ENCODE measurements at regions of chr3 and their contacts with region 1.

Region 1: DNA sequence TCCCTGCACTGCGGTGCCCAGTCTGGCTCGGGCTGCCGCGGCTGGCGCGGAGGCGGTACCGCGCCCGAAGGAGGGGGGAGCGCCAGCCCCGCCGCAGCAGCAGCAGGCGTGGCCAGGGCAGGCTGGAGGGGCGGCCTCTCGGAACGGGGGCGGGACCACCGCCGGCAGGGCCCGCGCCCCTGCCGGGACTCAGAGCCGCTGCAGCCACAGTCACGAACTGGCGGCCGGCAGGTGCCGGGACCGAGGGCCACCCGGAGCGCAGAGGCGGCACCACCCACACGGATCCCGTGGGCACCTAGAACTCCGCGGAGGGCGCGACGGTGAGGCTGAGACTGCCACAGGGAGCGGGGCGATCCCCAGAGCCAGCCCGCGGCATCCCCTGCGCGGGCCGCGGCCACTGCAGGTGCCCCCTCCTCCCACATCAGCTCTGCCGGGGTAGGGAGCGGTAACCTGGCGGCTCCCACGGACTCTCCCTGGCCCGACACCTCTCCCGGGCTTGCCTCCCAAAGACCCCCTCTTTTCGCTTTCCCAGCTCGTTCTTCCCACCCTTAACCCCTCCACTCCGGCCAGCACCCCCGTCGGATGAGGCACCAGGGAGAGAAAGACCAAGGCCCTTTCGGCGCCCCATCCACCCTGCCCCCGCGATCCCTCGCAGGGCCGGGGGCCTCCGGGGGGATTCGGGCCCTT is at the start of gene VWA5B2:
- DNase-seq: peak in 1 of 2 donors; percentile 26
- H3K4me3 ChIP-seq: peak within 1 kb of the TSS; percentile 41 to 68 (median 54)
- H3K27ac ChIP-seq: no peak within 1 kb of the TSS
- H3K4me1 ChIP-seq: peaks cover 4 to 8% of the 10 kb centered on the region in 2 donors
- H3K27me3 ChIP-seq: peaks cover 10 to 37% of the 10 kb centered on the region in 2 donors
- CTCF ChIP-seq: peak in 1 of 3 donors; percentile 29
- POLR2A ChIP-seq: no peak
- total RNA-seq, gene VWA5B2: 0.16 to 0.88 (median 0.33) TPM

Region 2: DNA sequence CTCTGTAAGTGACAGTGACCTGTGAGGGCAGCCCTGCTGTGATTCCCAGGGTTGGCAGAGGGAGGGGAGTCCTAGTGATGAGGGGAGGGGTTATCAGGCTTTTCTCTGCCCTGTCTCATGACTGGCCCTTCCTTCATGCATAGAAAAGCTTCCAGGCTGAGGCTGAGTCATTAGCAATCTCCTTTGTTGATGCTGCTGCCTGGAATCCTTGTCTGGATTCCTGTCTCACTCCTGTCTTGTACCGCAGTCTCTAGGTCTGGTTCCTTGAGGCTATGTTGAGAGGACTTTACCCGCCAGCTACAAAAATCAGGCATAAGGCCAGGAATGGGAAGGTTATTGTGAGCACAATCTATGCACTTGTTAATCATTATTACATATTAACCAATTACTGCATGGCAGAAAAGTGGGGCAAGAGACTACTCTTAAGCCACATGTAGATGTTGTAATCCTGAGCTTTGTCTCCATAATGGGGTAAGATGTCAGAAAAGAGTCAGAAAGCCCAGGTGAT is 681.2 kb before region 1 on chr3:
- intact Hi-C with region 1: no loop called
- DNase-seq: no peak
- H3K4me3 ChIP-seq: no peak overlapping the region
- H3K27ac ChIP-seq: no peak overlapping the region
- H3K4me1 ChIP-seq: no peaks in the 10 kb centered on the region
- H3K27me3 ChIP-seq: no peaks in the 10 kb centered on the region
- CTCF ChIP-seq: no peak
- POLR2A ChIP-seq: no peak

Region 3: GRCh38 chr3:184022323-184022722 is 207.2 kb before region 1 on chr3:
- intact Hi-C with region 1: no loop called
- DNase-seq: no peak
- H3K4me3 ChIP-seq: no peak overlapping the region
- H3K27ac ChIP-seq: no peak overlapping the region
- H3K4me1 ChIP-seq: no peaks in the 10 kb centered on the region
- H3K27me3 ChIP-seq: no peaks in the 10 kb centered on the region
- CTCF ChIP-seq: no peak
- POLR2A ChIP-seq: no peak

Region 4: DNA sequence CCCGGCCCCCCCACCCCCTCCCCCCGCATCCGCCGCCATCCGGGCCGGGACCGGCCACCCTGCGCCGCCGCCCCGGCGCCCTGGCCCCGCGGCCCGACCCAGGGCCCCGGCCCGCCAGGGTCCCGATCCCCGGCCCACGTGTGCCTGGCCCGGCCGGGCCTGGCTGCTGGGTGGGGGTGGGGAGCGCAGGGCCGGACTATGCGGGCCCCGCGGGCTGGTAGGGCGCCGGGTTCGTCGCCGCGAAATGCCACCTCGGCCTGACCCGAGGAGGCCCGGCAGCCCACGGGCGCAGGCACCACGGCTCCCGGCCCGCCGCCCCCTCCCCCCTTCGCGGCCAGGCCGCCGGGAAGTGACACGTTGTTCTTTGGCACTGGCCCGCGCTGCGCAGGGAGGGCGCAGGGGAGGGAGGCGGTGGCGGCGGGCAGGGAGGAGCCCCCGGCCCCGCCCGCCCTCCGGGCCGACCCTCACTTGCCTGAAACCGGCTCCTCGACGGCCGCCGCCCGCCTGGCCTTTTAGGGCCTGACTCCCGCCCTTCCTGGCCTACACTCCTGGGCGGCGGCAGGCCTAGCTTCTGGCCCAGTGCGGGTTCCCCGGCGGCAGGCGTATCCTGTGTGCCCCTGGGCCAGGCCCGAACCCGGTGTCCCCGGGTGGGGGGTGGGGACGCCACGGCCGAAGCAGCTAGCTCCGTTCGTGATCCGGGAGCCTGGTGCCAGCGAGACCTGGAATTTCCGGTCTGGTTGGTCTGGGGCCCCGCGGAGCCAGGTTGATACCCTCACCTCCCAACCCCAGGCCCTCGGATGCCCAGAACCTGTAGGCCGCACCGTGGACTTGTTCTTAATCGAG is 85.4 kb after region 1 on chr3:
- intact Hi-C with region 1: no loop called
- DNase-seq: peak; percentile 76 to 84
- H3K4me3 ChIP-seq: peak overlapping the region; percentile 63 to 86 (median 64)
- H3K27ac ChIP-seq: peak overlapping the region; percentile 95 to 99
- H3K4me1 ChIP-seq: peaks cover 6 to 31% of the 10 kb centered on the region in 2 donors
- H3K27me3 ChIP-seq: no peaks in the 10 kb centered on the region
- CTCF ChIP-seq: no peak
- POLR2A ChIP-seq: no peak

Region 5: DNA sequence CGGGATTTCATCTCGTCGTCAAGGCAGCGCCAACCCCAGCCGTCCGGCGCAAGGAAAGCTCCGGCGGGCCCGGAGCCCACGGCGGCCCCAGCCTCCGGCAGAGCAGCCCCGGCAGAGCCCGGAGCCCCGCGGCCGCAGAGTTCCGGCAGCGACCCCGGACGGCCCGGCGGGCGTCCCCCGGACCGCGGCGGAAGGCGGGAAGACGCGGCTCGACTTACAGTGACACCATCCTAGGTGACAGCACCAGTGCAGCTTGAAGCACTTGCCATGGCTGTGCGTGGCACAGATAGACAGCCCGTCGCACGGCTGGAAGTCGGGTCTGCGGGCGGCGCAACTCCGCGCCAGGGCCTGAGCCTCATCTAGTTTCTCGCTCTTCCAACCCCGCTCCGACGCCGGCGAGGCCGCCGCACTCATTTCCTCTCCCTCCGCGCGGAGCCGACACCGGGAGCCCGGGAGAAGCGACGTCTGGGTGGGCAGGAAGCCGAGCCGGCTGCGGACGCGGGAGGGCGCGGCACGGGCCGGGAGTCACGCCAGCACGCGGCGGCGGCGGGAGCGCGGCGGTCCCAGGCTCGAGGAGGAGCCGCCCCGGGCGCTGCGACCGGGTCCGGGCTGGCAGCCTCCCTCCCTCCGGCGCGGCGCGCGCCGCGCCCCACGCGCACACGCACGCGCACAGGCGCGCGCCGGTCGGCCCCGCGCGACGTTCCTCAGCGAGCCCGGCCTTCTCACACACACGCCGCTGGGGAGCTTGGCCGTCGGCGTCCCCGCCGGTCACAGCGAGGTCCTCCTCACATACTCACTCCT is 923.1 kb after region 1 on chr3 and contains the start of gene C3orf70:
- intact Hi-C with region 1: no loop called
- DNase-seq: no peak
- H3K4me3 ChIP-seq: peak within 1 kb of the TSS; percentile 57 to 72 (median 63)
- H3K27ac ChIP-seq: peak within 1 kb of the TSS; percentile 67 to 72
- H3K4me1 ChIP-seq: peaks cover 0 to 6% of the 10 kb centered on the region in 2 donors
- H3K27me3 ChIP-seq: peaks cover 3 to 7% of the 10 kb centered on the region in 2 donors
- CTCF ChIP-seq: no peak
- POLR2A ChIP-seq: no peak
- total RNA-seq, gene C3orf70: 1.3 to 4.8 (median 3.8) TPM

Region 6: GRCh38 chr3:186185194-186185787 is 1955.8 kb after region 1 on chr3:
- intact Hi-C with region 1: loop called (anchors 5 kb)
- DNase-seq: no peak
- H3K4me3 ChIP-seq: no peak overlapping the region
- H3K27ac ChIP-seq: no peak overlapping the region
- H3K4me1 ChIP-seq: no peaks in the 10 kb centered on the region
- H3K27me3 ChIP-seq: peaks cover 0 to 2% of the 10 kb centered on the region in 2 donors
- CTCF ChIP-seq: no peak
- POLR2A ChIP-seq: no peak